Activated CD4-positive, alpha-beta memory T cell treated with anti-CD3 and anti-CD28 coated beads for 36 hours (primary cell): ENCODE measurements at regions of chr6 and their contacts with region 1.

Region 1: DNA sequence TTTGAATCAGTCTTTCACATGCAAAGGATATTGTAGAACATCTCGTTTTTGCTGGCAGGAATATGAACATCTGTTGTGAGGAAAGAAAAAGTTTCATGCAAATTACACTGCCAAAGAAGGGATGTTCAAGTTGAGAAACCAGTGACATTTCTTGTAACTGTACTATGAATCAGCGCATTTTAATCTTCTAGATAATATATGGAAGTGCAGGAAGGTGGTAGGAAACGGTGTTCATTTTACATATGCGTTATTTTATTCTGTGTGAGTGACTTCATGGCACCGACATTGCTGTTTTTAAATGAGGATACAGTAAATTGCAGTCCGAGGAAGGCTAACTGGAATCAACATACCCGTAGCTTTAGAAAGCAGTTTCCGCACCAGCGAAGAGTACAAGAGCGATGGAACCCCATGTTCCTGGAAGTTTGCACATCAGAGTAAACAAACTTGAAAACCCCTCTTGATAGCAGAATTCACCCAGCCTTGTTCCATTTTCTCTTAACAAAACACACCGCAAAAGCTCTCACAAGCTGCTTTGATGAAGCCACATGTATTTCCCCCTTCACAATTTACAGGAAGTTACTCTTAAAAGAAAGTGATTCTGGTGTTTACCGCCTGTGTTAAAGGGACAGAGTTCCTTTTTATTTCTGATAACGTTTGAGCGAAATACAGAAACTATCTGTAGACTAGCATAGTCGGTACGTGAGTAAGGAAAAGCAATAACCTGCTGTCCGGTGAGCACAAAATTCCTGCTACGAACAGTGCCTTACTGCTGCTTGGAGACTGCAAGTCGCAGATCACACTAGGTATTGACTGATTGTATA is 11.5 kb downstream of the PRDM1 start:
- DNase-seq: peak; percentile 69
- H3K4me3 Mint-ChIP-seq: peak overlapping the region; percentile 91
- H3K27ac Mint-ChIP-seq: peak overlapping the region; percentile 96
- H3K4me1 Mint-ChIP-seq: peaks cover 77% of the 10 kb centered on the region
- H3K27me3 Mint-ChIP-seq: peaks cover 2% of the 10 kb centered on the region

Region 2: GRCh38 chr6:105646391-105646867 is 451.2 kb before region 1 on chr6:
- CTCF ChIA-PET with region 1: no interaction called
- POLR2A ChIA-PET with region 1: interaction called, 3 read pairs
- intact Hi-C with region 1: loop called (anchors 2 kb)
- DNase-seq: peak; percentile 68
- H3K4me3 Mint-ChIP-seq: no peak overlapping the region
- H3K27ac Mint-ChIP-seq: peak overlapping the region; percentile 70
- H3K4me1 Mint-ChIP-seq: peaks cover 65% of the 10 kb centered on the region
- H3K27me3 Mint-ChIP-seq: peaks cover 48% of the 10 kb centered on the region

Region 3: GRCh38 chr6:105898286-105898685 is 199.3 kb before region 1 on chr6:
- CTCF ChIA-PET with region 1: no interaction called
- POLR2A ChIA-PET with region 1: interaction called, 4 read pairs
- intact Hi-C with region 1: loop called (anchors 1 kb)
- DNase-seq: peak; percentile 67
- H3K4me3 Mint-ChIP-seq: no peak overlapping the region
- H3K27ac Mint-ChIP-seq: no peak overlapping the region
- H3K4me1 Mint-ChIP-seq: peaks cover 14% of the 10 kb centered on the region
- H3K27me3 Mint-ChIP-seq: peaks cover 9% of the 10 kb centered on the region

Region 4: GRCh38 chr6:106085984-106086813 is 11.4 kb before region 1 on chr6 and contains the start of gene PRDM1:
- CTCF ChIA-PET with region 1: interaction called, 38 read pairs
- POLR2A ChIA-PET with region 1: interaction called, 236 read pairs
- intact Hi-C with region 1: loop called (anchors 1 kb)
- DNase-seq: peak; percentile 89
- H3K4me3 Mint-ChIP-seq: peak within 1 kb of the TSS; percentile 90
- H3K27ac Mint-ChIP-seq: peak within 1 kb of the TSS; percentile 94
- H3K4me1 Mint-ChIP-seq: peaks cover 73% of the 10 kb centered on the region
- H3K27me3 Mint-ChIP-seq: peaks cover 2% of the 10 kb centered on the region
- total RNA-seq, gene PRDM1: 70.9 to 78.9 TPM

Region 5: GRCh38 chr6:106181664-106182418 is 84.2 kb after region 1 on chr6:
- CTCF ChIA-PET with region 1: interaction called, 10 read pairs
- POLR2A ChIA-PET with region 1: interaction called, 68 read pairs
- intact Hi-C with region 1: loop called (anchors 1 kb)
- DNase-seq: no peak
- H3K4me3 Mint-ChIP-seq: no peak overlapping the region
- H3K27ac Mint-ChIP-seq: peak overlapping the region; percentile 46
- H3K4me1 Mint-ChIP-seq: peaks cover 60% of the 10 kb centered on the region
- H3K27me3 Mint-ChIP-seq: no peaks in the 10 kb centered on the region

Region 6: GRCh38 chr6:106300944-106301343 is 203.3 kb after region 1 on chr6:
- CTCF ChIA-PET with region 1: no interaction called
- POLR2A ChIA-PET with region 1: no interaction called
- intact Hi-C with region 1: loop called (anchors 5 kb)
- DNase-seq: no peak
- H3K4me3 Mint-ChIP-seq: no peak overlapping the region
- H3K27ac Mint-ChIP-seq: no peak overlapping the region
- H3K4me1 Mint-ChIP-seq: peaks cover 15% of the 10 kb centered on the region
- H3K27me3 Mint-ChIP-seq: no peaks in the 10 kb centered on the region